ENCODE measurements at regions of chr7 and their contacts with region 1.

Region 1: DNA sequence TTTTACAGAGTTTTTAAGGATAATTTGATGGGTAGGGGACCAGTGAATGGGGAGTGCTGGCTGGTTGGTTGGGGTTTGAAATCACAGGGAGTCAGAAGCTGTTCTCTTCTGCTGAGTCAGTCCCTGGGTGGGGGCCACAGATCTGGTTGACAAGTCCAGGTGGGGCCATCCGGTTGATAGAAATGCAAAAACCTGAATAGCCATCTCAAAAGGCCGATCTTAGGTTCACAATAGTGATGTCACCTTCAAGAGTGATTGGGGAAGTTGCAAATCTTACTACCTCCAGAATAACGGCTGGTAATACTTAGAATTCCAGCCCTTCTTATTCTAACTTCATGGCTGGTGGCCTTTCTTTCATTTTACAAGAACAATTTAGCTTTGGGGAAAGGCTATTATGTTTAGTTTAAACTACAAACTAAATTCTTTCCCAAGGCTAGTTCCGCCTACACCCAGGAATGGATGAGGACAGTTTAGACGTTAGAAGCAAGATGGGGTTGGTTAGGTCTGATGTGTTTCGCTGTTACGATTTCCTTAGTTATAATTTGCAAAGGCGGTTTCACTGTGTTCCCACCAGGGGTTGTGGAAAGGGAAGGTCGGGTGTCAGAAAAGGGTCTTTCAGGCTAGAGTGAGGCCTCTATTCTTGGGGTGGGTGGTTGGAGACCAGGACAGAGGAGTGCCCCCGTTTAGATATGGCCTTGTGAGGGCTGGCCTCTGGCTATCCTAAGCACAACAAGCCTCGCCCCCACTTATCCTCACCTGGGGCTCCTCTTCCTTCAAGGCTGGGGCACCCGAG is 27.4 kb downstream of the IFT22 start:
- DNase-seq: no peak
- ATAC-seq: no peak

Region 2: GRCh38 chr7:101153969-101154692 is 140.1 kb before region 1 on chr7 and contains the start of gene AP1S1:
- intact Hi-C with region 1: loop called (anchors 5 kb)
- DNase-seq: peak; percentile 96
- ATAC-seq: peak; percentile 99
- total RNA-seq, gene AP1S1: 14.1 TPM

Region 3: GRCh38 chr7:101410743-101411507 is 116.7 kb after region 1 on chr7:
- intact Hi-C with region 1: no loop called
- DNase-seq: no peak
- ATAC-seq: no peak